CD8-positive, alpha-beta memory T cell (primary cell): ENCODE measurements at regions of chr17 and their contacts with region 1.

Region 1: GRCh38 chr17:7435221-7435675 is at the start of gene TMEM102:
- DNase-seq: peak; percentile 96 to 99 (median 98)
- H3K4me3 ChIP-seq: peak within 1 kb of the TSS; percentile 92
- H3K4me3 Mint-ChIP-seq: peak within 1 kb of the TSS; percentile 88 to 98 (median 96)
- H3K27ac ChIP-seq: peak within 1 kb of the TSS; percentile 77
- H3K27ac Mint-ChIP-seq: peak within 1 kb of the TSS; percentile 93 to 99 (median 97)
- H3K4me1 ChIP-seq: peaks cover 44% of the 10 kb centered on the region
- H3K4me1 Mint-ChIP-seq: peaks cover 30 to 48% (median 42%) of the 10 kb centered on the region in 3 donors
- H3K27me3 ChIP-seq: peaks cover 17% of the 10 kb centered on the region
- H3K27me3 Mint-ChIP-seq: peaks cover 14 to 18% of the 10 kb centered on the region in 2 donors
- total RNA-seq, gene TMEM102: 11.1 to 11.9 TPM

Region 2: GRCh38 chr17:7079581-7080455 is 355.4 kb before region 1 on chr17 and contains the start of gene CLEC10A:
- CTCF ChIA-PET with region 1: no interaction called
- POLR2A ChIA-PET with region 1: no interaction called
- DNase-seq: no peak
- H3K4me3 ChIP-seq: no peak within 1 kb of the TSS
- H3K4me3 Mint-ChIP-seq: peak within 1 kb of the TSS in 1 of 7 donors; percentile 54
- H3K27ac ChIP-seq: no peak within 1 kb of the TSS
- H3K27ac Mint-ChIP-seq: peak within 1 kb of the TSS in 1 of 8 donors; percentile 8
- H3K4me1 ChIP-seq: peaks cover 20% of the 10 kb centered on the region
- H3K4me1 Mint-ChIP-seq: peaks cover 34 to 44% (median 37%) of the 10 kb centered on the region in 3 donors
- H3K27me3 ChIP-seq: no peaks in the 10 kb centered on the region
- H3K27me3 Mint-ChIP-seq: peaks cover 1 to 4% of the 10 kb centered on the region in 2 donors
- total RNA-seq, gene CLEC10A: 0.33 to 0.42 TPM

Region 3: GRCh38 chr17:7351665-7352501 is 83.4 kb before region 1 on chr17 and contains the start of gene KCTD11:
- CTCF ChIA-PET with region 1: interaction called, 78 read pairs
- POLR2A ChIA-PET with region 1: interaction called, 5 read pairs
- DNase-seq: peak; percentile 62 to 90 (median 80)
- H3K4me3 ChIP-seq: peak within 1 kb of the TSS; percentile 52
- H3K4me3 Mint-ChIP-seq: peak within 1 kb of the TSS; percentile 83 to 93 (median 87)
- H3K27ac ChIP-seq: peak within 1 kb of the TSS; percentile 67
- H3K27ac Mint-ChIP-seq: peak within 1 kb of the TSS; percentile 90 to 98 (median 96)
- H3K4me1 ChIP-seq: peaks cover 30% of the 10 kb centered on the region
- H3K4me1 Mint-ChIP-seq: peaks cover 32 to 65% (median 34%) of the 10 kb centered on the region in 3 donors
- H3K27me3 ChIP-seq: no peaks in the 10 kb centered on the region
- H3K27me3 Mint-ChIP-seq: no peaks in the 10 kb centered on the region
- total RNA-seq, gene KCTD11: 4.6 to 5.1 TPM

Region 4: GRCh38 chr17:7394452-7395191 is 40.6 kb before region 1 on chr17 and contains the start of gene PLSCR3:
- CTCF ChIA-PET with region 1: interaction called, 4 read pairs
- POLR2A ChIA-PET with region 1: interaction called, 12 read pairs
- DNase-seq: peak; percentile 76 to 86 (median 83)
- H3K4me3 ChIP-seq: peak within 1 kb of the TSS; percentile 88
- H3K4me3 Mint-ChIP-seq: peak within 1 kb of the TSS; percentile 91 to 99 (median 95)
- H3K27ac ChIP-seq: peak within 1 kb of the TSS; percentile 80
- H3K27ac Mint-ChIP-seq: peak within 1 kb of the TSS; percentile 90 to 98 (median 96)
- H3K4me1 ChIP-seq: peaks cover 35% of the 10 kb centered on the region
- H3K4me1 Mint-ChIP-seq: peaks cover 21 to 46% (median 27%) of the 10 kb centered on the region in 3 donors
- H3K27me3 ChIP-seq: no peaks in the 10 kb centered on the region
- H3K27me3 Mint-ChIP-seq: no peaks in the 10 kb centered on the region
- total RNA-seq, gene PLSCR3: 79.1 to 81.6 TPM

Region 5: GRCh38 chr17:7484067-7484918 is 49.0 kb after region 1 on chr17 and contains the start of gene POLR2A:
- CTCF ChIA-PET with region 1: interaction called, 49 read pairs
- POLR2A ChIA-PET with region 1: interaction called, 48 read pairs
- DNase-seq: peak; percentile 95 to 99 (median 98)
- H3K4me3 ChIP-seq: peak within 1 kb of the TSS; percentile 91
- H3K4me3 Mint-ChIP-seq: peak within 1 kb of the TSS; percentile 96 to 100 (median 98)
- H3K27ac ChIP-seq: peak within 1 kb of the TSS; percentile 98
- H3K27ac Mint-ChIP-seq: peak within 1 kb of the TSS; percentile 99 to 100 (median 100)
- H3K4me1 ChIP-seq: peaks cover 49% of the 10 kb centered on the region
- H3K4me1 Mint-ChIP-seq: peaks cover 56 to 80% (median 73%) of the 10 kb centered on the region in 3 donors
- H3K27me3 ChIP-seq: no peaks in the 10 kb centered on the region
- H3K27me3 Mint-ChIP-seq: peaks cover 0 to 12% of the 10 kb centered on the region in 2 donors
- total RNA-seq, gene POLR2A: 190 to 192 TPM

Region 6: GRCh38 chr17:7523033-7523432 is 87.8 kb after region 1 on chr17:
- CTCF ChIA-PET with region 1: interaction called, 10 read pairs
- POLR2A ChIA-PET with region 1: no interaction called
- DNase-seq: peak; percentile 31 to 62 (median 37)
- H3K4me3 ChIP-seq: no peak overlapping the region
- H3K4me3 Mint-ChIP-seq: no peak overlapping the region
- H3K27ac ChIP-seq: no peak overlapping the region
- H3K27ac Mint-ChIP-seq: no peak overlapping the region
- H3K4me1 ChIP-seq: no peaks in the 10 kb centered on the region
- H3K4me1 Mint-ChIP-seq: peaks cover 0 to 5% (median 2%) of the 10 kb centered on the region in 3 donors
- H3K27me3 ChIP-seq: no peaks in the 10 kb centered on the region
- H3K27me3 Mint-ChIP-seq: no peaks in the 10 kb centered on the region

Region 7: GRCh38 chr17:7589204-7589868 is 154.1 kb after region 1 on chr17:
- CTCF ChIA-PET with region 1: interaction called, 14 read pairs
- POLR2A ChIA-PET with region 1: interaction called, 16 read pairs
- DNase-seq: peak; percentile 37 to 76 (median 47)
- H3K4me3 ChIP-seq: no peak overlapping the region
- H3K4me3 Mint-ChIP-seq: peak overlapping the region in 1 of 7 donors; percentile 65
- H3K27ac ChIP-seq: no peak overlapping the region
- H3K27ac Mint-ChIP-seq: peak overlapping the region in 1 of 8 donors; percentile 83
- H3K4me1 ChIP-seq: peaks cover 8% of the 10 kb centered on the region
- H3K4me1 Mint-ChIP-seq: peaks cover 7 to 13% (median 12%) of the 10 kb centered on the region in 3 donors
- H3K27me3 ChIP-seq: no peaks in the 10 kb centered on the region
- H3K27me3 Mint-ChIP-seq: no peaks in the 10 kb centered on the region